Sciatic nerve (tissue), 2 donors: ENCODE measurements at regions of chr11 and their contacts with region 1.

Region 1: GRCh38 chr11:59171508-59172322 is at the start of gene DTX4:
- DNase-seq: peak; percentile 98
- ATAC-seq: peak; percentile 95
- total RNA-seq, gene DTX4: 35.9 TPM

Region 2: GRCh38 chr11:59207988-59208451 is 36.3 kb after region 1 on chr11:
- intact Hi-C with region 1: loop called (anchors 2 kb)
- DNase-seq: no peak
- ATAC-seq: peak; percentile 74

Region 3: GRCh38 chr11:59284773-59285129 is 113.0 kb after region 1 on chr11:
- intact Hi-C with region 1: loop called (anchors 5 kb)
- DNase-seq: no peak
- ATAC-seq: peak; percentile 42

Region 4: DNA sequence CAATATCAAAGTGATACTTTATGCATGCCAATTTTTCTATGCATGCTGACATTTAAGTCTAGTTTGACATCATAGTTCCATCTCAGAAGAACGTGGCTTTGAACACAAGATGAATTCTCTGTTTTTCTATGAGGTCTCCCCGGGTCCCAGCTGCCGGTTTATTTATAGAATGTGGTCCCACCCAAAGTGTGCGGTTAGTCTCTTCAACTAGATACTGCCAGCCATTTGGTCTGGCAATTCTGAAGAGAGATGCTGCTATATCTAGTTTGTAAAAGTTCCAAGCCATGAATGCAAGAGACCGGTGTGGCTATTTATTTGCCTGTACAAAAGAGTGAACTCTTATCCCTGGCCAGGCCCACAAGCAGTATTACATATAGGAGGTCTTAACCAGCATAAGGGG is 245.3 kb after region 1 on chr11:
- intact Hi-C with region 1: no loop called
- DNase-seq: no peak
- ATAC-seq: no peak

Region 5: GRCh38 chr11:61061081-61061826 is 1889.5 kb after region 1 on chr11:
- intact Hi-C with region 1: no loop called
- DNase-seq: no peak
- ATAC-seq: no peak